ENCODE measurements at regions of chr10 and their contacts with region 1.

Region 1: DNA sequence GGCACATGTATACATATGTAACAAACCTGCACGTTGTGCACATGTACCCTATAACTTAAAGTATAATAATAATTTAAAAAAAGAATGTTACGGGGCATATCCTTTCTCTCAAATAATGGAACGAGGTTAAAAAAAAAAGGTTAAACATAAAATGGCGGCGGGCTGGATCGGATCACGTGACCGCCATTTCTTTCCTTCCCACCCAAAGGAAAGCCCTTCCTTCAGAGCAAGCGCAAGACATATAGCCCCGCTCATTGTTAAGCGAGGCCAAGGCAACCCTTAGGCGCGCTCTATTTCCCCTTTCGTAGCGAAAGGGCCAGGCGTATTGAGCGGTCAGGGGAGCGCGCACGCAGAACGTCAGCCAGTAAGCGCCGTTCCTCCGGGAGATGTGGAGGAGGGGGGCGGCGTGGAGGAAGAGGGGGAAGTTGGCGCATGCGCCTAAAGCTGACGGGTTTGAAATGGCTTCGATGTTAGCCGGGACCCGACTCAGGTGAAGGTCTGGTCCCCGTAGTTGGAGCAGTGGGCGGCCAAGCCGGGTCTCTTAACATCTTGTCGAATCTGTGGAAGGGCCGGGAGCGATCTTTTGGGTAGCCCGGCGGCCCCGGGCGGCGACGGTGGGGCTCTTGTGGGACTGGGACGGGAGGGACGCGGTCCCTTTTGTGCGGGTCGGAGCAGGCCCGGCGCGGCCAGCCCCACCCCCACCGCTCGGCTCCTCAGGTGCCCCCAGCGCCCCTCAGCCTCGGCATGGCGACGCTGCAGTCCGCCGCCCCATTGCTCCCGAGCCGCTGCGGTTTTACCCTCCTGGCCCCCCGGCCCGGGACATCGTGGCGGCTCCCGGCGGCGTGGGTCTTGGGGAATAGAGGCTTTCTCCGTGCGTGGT is at the start of gene CCAR1:
- DNase-seq: peak; percentile 98
- H3K4me3 Mint-ChIP-seq: peak within 1 kb of the TSS; percentile 95
- H3K27ac Mint-ChIP-seq: peak within 1 kb of the TSS; percentile 98
- H3K4me1 Mint-ChIP-seq: peaks cover 14% of the 10 kb centered on the region
- H3K27me3 Mint-ChIP-seq: no peaks in the 10 kb centered on the region
- total RNA-seq, gene CCAR1: 95.2 and 112 TPM in 2 replicates

Region 2: DNA sequence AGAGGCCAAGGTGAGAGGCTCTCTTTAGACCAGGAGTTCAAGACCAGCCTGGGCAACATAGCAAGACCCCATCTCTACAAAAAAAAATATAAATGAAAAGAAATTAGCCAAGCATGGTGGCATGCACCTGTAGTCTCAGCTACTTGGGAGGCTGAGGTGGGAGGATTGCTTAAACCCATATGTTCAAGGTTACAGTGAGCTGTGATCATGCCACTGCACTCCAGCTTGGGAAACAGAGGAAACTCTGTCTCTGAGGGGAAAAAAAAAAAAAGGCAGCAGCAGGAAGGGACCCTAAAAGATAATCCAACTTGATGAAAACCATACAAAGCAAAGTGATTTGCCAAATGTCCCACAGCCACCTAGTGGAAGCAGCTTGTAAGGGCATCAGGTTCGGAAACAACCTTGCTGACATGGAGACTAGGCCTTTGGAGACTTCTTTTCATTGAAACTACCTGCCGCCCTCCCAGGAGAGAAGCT is 372.7 kb before region 1 on chr10:
- intact Hi-C with region 1: loop called (anchors 5 kb)
- DNase-seq: peak; percentile 82
- H3K4me3 Mint-ChIP-seq: no peak overlapping the region
- H3K27ac Mint-ChIP-seq: peak overlapping the region; percentile 59
- H3K4me1 Mint-ChIP-seq: peaks cover 8% of the 10 kb centered on the region
- H3K27me3 Mint-ChIP-seq: no peaks in the 10 kb centered on the region

Region 3: GRCh38 chr10:68406815-68407548 is 314.1 kb before region 1 on chr10 and contains the start of gene RUFY2:
- intact Hi-C with region 1: loop called (anchors 5 kb)
- DNase-seq: peak; percentile 95
- H3K4me3 Mint-ChIP-seq: peak within 1 kb of the TSS; percentile 93
- H3K27ac Mint-ChIP-seq: peak within 1 kb of the TSS; percentile 88
- H3K4me1 Mint-ChIP-seq: peaks cover 19% of the 10 kb centered on the region
- H3K27me3 Mint-ChIP-seq: no peaks in the 10 kb centered on the region
- total RNA-seq, gene RUFY2: 9.5 and 10.3 TPM in 2 replicates

Region 4: DNA sequence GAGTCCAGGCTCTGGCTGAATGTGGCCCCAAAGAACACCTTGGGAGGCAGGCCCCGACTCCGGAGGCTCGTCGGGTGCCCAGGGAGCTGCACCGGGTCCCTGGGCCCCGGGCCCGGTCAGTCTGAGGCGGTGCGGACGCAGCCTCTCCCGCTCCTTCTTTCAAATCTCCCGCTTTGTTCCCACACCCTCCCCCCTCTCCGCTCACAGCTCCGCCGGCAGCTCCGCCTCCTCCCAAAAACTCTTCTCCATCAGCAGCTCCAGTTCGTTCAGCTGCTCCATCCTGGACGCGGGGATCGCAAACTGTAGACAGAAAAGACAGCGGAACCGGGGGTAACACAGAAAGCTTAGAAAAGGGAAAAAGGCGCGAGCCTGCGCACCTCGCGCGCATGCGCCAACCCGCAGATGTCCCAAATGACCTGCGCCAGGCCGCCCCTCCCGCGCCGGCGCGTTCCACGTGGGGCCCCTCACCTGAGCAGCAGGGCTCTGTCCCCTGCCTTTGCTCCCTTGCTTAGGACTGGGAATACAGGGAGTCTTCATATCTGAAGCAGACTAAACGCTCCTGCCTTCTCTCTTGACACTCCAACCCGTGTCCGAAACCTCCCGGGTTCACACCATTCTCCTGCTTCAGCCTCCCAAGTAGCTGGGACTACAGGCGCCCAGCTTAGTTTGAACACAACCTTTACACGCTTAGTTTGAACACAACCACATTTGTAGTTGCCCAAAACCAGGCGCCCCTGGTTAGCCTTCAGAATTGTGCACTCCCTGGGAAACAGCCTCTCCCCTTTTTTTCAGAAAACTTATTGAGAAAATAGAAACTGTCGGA is 249.2 kb before region 1 on chr10 and contains the start of gene DNA2:
- intact Hi-C with region 1: loop called (anchors 1 kb)
- DNase-seq: peak; percentile 94
- H3K4me3 Mint-ChIP-seq: peak within 1 kb of the TSS; percentile 97
- H3K27ac Mint-ChIP-seq: peak within 1 kb of the TSS; percentile 99
- H3K4me1 Mint-ChIP-seq: peaks cover 21% of the 10 kb centered on the region
- H3K27me3 Mint-ChIP-seq: no peaks in the 10 kb centered on the region
- total RNA-seq, gene DNA2: 58.0 and 59.1 TPM in 2 replicates

Region 5: GRCh38 chr10:68526626-68527307 is 194.3 kb before region 1 on chr10:
- intact Hi-C with region 1: loop called (anchors 1 kb)
- DNase-seq: no peak
- H3K4me3 Mint-ChIP-seq: peak overlapping the region; percentile 97
- H3K27ac Mint-ChIP-seq: peak overlapping the region; percentile 87
- H3K4me1 Mint-ChIP-seq: peaks cover 6% of the 10 kb centered on the region
- H3K27me3 Mint-ChIP-seq: no peaks in the 10 kb centered on the region

Region 6: GRCh38 chr10:68600041-68600778 is 120.8 kb before region 1 on chr10:
- intact Hi-C with region 1: loop called (anchors 2 kb)
- DNase-seq: peak; percentile 88
- H3K4me3 Mint-ChIP-seq: peak overlapping the region; percentile 90
- H3K27ac Mint-ChIP-seq: peak overlapping the region; percentile 88
- H3K4me1 Mint-ChIP-seq: peaks cover 28% of the 10 kb centered on the region
- H3K27me3 Mint-ChIP-seq: no peaks in the 10 kb centered on the region

Region 7: GRCh38 chr10:68705548-68705947 is 15.5 kb before region 1 on chr10:
- intact Hi-C with region 1: no loop called
- DNase-seq: no peak
- H3K4me3 Mint-ChIP-seq: no peak overlapping the region
- H3K27ac Mint-ChIP-seq: no peak overlapping the region
- H3K4me1 Mint-ChIP-seq: no peaks in the 10 kb centered on the region
- H3K27me3 Mint-ChIP-seq: no peaks in the 10 kb centered on the region

Region 8: GRCh38 chr10:68742397-68742796 is 21.4 kb after region 1 on chr10:
- intact Hi-C with region 1: no loop called
- DNase-seq: no peak
- H3K4me3 Mint-ChIP-seq: no peak overlapping the region
- H3K27ac Mint-ChIP-seq: no peak overlapping the region
- H3K4me1 Mint-ChIP-seq: peaks cover 3% of the 10 kb centered on the region
- H3K27me3 Mint-ChIP-seq: no peaks in the 10 kb centered on the region

Region 9: GRCh38 chr10:68826764-68827591 is 105.9 kb after region 1 on chr10 and contains the start of gene STOX1:
- intact Hi-C with region 1: no loop called
- DNase-seq: peak; percentile 87
- H3K4me3 Mint-ChIP-seq: peak within 1 kb of the TSS; percentile 80
- H3K27ac Mint-ChIP-seq: no peak within 1 kb of the TSS
- H3K4me1 Mint-ChIP-seq: peaks cover 5% of the 10 kb centered on the region
- H3K27me3 Mint-ChIP-seq: peaks cover 23% of the 10 kb centered on the region
- total RNA-seq, gene STOX1: 0.76 and 0.82 TPM in 2 replicates

Measured in activated CD4-positive, alpha-beta T cell treated with anti-CD3 and anti-CD28 coated beads, Interleukin-2, amount 10 ng/mL, durations not matched to agents 24 days and 14 days (primary cell).